H1 (cell line): ENCODE measurements at regions of chr2 and their contacts with region 1.

Region 1: DNA sequence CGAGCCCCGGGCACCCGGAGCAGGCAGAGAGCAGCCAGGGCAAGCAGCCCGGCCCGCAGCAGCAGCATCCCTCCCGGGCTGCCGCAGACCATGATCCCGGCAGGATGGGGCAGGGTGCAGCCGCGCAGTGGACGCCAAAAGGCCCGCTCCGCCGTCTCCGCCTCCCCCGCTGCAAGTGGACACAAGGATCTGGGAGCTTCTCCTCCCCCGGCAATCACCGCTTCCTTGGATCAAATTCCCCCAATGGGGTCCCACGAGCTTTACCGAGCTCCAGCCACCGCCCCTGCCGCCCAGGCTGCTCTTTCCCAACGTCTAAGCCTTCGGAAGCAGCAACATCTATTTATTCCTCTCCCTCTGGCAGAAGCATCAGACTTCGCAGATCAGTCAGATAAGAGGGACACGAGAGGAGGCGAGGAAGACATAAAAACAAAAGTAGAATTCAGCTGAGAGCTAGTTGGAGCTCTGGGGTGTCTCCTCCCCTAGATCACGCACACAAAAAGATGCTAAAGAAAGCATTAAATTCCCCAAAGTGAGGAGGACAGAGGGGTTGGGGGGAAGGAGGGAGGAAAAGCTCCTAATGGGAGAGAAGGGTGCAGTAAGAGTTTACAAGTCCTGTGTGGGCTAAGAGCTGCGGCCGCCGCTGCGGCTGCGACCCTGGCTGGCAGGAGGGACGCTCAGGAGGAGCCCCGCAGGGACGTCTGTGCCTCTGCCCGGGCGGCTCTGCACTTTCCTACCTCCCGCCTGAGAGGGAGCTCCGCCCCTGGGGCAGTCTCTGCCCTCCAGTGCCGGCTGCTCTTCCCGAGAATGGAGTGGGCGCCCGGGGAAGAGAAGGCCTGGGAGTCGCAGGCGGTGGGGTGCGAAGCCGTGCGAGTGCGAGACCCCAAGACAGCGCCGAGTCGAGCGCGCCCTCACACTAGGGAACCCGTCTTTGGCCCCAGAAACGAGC is at the start of gene FRZB:
- DNase-seq: peak; percentile 17 to 77
- H3K4me3 ChIP-seq: peak within 1 kb of the TSS; percentile 48 to 68 (median 54)
- H3K27ac ChIP-seq: no peak within 1 kb of the TSS
- H3K4me1 ChIP-seq: peaks cover 3 to 14% (median 7%) of the 10 kb centered on the region in 4 experiments; a peak in 6 of 7 replicates
- H3K27me3 ChIP-seq: peaks cover 2 to 19% (median 12%) of the 10 kb centered on the region in 4 experiments
- CTCF ChIP-seq: no peak
- EP300 ChIP-seq: no peak
- POLR2A ChIP-seq: no peak
- RAD21 ChIP-seq: no peak; a peak in 1 of 4 replicates
- total RNA-seq, gene FRZB: 4.6 and 4.7 TPM in 2 replicates

Region 2: DNA sequence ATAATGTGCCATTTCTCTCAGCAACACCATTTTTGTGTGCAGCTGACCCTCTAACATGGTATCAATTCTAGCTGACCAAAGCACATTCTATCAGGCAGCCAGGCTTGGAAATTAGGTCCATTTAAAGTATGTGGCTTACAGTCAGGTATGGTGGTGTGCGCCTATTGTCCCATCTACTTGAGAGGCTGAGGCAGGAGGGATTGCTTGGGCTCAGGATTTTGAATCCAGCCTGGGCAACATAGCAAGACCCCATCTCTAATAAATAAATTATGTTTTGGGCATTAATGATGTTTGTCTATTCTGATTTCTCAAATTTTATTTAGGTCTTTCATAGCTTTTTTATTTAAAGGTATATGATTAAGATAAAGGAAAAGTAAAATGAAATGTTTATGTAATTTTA is 87.4 kb before region 1 on chr2:
- CTCF ChIA-PET with region 1: interaction called, 71 read pairs
- POLR2A ChIA-PET with region 1: no interaction called
- DNase-seq: no peak
- H3K4me3 ChIP-seq: no peak overlapping the region
- H3K27ac ChIP-seq: no peak overlapping the region
- H3K4me1 ChIP-seq: no peaks in the 10 kb centered on the region
- H3K27me3 ChIP-seq: no peaks in the 10 kb centered on the region
- CTCF ChIP-seq: no peak
- EP300 ChIP-seq: no peak
- POLR2A ChIP-seq: no peak
- RAD21 ChIP-seq: no peak

Region 3: DNA sequence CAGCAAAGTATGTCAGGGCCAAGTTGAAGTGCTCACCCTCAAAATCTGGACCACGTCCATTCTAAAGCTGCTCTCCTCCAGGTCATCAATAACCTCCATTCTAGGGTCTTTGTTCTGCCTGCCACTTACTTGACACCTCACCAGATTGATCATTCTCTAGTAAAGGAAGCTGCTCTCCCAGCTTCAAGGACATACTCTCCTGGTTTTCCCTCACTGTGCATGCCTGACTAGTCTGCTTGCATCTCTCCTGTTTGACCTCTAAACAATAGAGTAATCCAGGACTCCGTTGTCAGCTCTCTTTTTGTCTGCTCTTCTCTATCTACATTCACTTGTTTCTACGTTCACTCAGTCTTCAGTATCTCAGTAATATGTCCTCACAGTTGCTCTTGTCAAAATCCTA is 59.4 kb before region 1 on chr2:
- CTCF ChIA-PET with region 1: interaction called, 18 read pairs
- POLR2A ChIA-PET with region 1: no interaction called
- DNase-seq: no peak
- H3K4me3 ChIP-seq: no peak overlapping the region
- H3K27ac ChIP-seq: no peak overlapping the region
- H3K4me1 ChIP-seq: no peaks in the 10 kb centered on the region
- H3K27me3 ChIP-seq: no peaks in the 10 kb centered on the region
- CTCF ChIP-seq: no peak
- EP300 ChIP-seq: no peak
- POLR2A ChIP-seq: no peak
- RAD21 ChIP-seq: no peak

Region 4: DNA sequence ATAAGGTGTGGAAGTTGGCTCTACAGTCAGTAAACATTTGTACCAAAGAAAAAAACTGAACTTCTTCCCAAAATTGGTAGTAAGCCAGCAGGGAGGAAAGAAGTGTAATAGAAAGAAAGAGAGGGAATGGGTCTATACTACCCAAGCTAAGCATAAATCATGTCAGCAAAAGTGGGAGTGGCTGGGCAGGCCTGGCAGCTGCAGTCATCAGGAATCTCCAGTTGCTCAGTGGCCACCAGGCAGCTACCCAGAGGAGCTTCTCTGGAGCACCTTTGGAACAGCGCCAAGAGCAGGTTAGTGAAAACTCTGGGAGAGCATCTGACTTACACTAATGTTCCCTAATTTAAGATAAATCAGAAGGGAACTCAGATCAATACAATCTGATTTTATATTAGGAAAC is 14.7 kb before region 1 on chr2:
- CTCF ChIA-PET with region 1: interaction called, 19 read pairs
- POLR2A ChIA-PET with region 1: interaction called, 3 read pairs
- DNase-seq: no peak
- H3K4me3 ChIP-seq: no peak overlapping the region
- H3K27ac ChIP-seq: no peak overlapping the region
- H3K4me1 ChIP-seq: peaks cover 0 to 5% (median 0%) of the 10 kb centered on the region in 4 experiments; a peak in 2 of 7 replicates
- H3K27me3 ChIP-seq: no peaks in the 10 kb centered on the region
- CTCF ChIP-seq: no peak
- EP300 ChIP-seq: no peak
- POLR2A ChIP-seq: no peak
- RAD21 ChIP-seq: no peak

Region 5: DNA sequence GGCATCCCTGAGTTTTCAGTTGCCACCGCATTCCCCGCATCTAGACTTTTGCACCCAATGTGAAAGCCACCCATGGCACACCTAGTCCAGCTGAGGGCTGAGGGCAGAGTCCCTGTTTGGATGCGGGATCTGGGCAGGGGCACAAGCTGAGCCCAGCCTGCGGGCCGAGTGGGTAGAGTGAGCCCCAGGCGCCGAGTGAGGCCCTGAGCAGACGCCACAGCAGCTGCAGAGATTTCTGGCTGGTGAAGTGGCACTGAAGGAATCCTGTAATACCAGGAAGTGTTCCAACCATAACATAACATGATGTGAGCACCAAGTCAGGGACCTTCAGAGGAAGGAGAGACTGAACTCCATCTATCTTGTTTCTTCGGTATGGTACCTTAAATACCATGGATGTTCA is 27.4 kb after region 1 on chr2:
- CTCF ChIA-PET with region 1: interaction called, 27 read pairs
- POLR2A ChIA-PET with region 1: no interaction called
- DNase-seq: no peak
- H3K4me3 ChIP-seq: no peak overlapping the region
- H3K27ac ChIP-seq: no peak overlapping the region
- H3K4me1 ChIP-seq: no peaks in the 10 kb centered on the region
- H3K27me3 ChIP-seq: no peaks in the 10 kb centered on the region
- CTCF ChIP-seq: no peak
- EP300 ChIP-seq: no peak
- POLR2A ChIP-seq: no peak
- RAD21 ChIP-seq: no peak